ENCODE measurements at regions of chr6 and their contacts with region 1.

Region 1: DNA sequence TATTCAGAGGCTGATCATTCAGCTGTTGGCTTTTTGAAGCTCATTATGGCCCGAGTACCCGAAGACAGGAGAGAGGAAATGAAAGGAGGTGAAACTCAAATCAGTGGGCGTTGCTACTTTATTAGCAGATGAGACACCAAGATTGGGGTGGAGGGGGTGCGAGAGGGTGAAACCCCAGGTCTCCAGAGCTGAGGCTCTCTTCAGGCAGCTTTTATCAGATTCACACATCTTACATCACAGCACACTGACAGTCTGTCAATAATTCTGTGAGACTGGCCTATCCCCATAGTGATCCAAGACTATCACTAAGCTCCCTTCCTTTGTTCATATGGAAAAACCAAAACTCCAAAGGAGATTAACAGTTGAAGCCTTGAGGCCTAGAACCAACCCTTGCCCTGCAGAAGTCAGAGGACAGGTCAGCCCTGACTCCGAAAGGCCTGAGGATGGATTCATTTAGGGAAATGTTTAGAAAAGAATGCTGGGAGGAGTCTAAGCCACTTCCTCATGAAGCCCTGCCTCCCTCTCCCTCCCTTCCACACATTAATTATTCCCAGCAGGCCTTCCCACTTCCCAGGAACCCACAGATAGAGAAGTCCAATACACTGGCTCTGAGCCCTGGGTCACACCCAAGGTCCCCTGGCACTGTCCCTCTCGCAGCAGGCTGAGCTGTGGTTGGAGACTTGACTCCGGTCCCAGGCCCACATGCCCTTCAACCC is 23.2 kb downstream of the TRERF1 start:
- DNase-seq: no peak
- ATAC-seq: peak; percentile 88
- H3K4me3 ChIP-seq: no peak overlapping the region
- H3K27ac ChIP-seq: peak overlapping the region; percentile 71
- H3K4me1 ChIP-seq: peaks cover 55% of the 10 kb centered on the region
- H3K27me3 ChIP-seq: no peaks in the 10 kb centered on the region
- CTCF ChIP-seq: no peak
- EP300 ChIP-seq: no peak
- POLR2A ChIP-seq: no peak
- RAD21 ChIP-seq: no peak; the same call in 1 of the 2 replicates

Region 2: GRCh38 chr6:42249279-42249678 is 179.2 kb before region 1 on chr6:
- CTCF ChIA-PET with region 1: no interaction called
- POLR2A ChIA-PET with region 1: no interaction called
- RAD21 ChIA-PET with region 1: no interaction called
- SMC1A ChIA-PET with region 1: no interaction called
- in situ Hi-C with region 1: no loop called
- intact Hi-C with region 1: no loop called
- DNase-seq: no peak
- ATAC-seq: no peak
- H3K4me3 ChIP-seq: no peak overlapping the region
- H3K27ac ChIP-seq: no peak overlapping the region
- H3K4me1 ChIP-seq: no peaks in the 10 kb centered on the region
- H3K27me3 ChIP-seq: no peaks in the 10 kb centered on the region
- CTCF ChIP-seq: no peak
- EP300 ChIP-seq: no peak
- POLR2A ChIP-seq: no peak
- RAD21 ChIP-seq: no peak

Region 3: GRCh38 chr6:42440778-42441696 is 12.6 kb after region 1 on chr6:
- CTCF ChIA-PET with region 1: interaction called, 4 read pairs
- POLR2A ChIA-PET with region 1: interaction called, 5 read pairs
- RAD21 ChIA-PET with region 1: interaction called, 10 read pairs
- SMC1A ChIA-PET with region 1: interaction called, 15 read pairs
- in situ Hi-C with region 1: no loop called
- intact Hi-C with region 1: no loop called
- DNase-seq: no peak
- ATAC-seq: no peak
- H3K4me3 ChIP-seq: 0 out of 2 replicates have a peak overlapping the region, but pooled peaks have one; percentile 9
- H3K27ac ChIP-seq: no peak overlapping the region
- H3K4me1 ChIP-seq: peaks cover 10% of the 10 kb centered on the region; the same call in 1 of the 2 replicates
- H3K27me3 ChIP-seq: no peaks in the 10 kb centered on the region
- CTCF ChIP-seq: no peak
- EP300 ChIP-seq: no peak
- POLR2A ChIP-seq: no peak
- RAD21 ChIP-seq: no peak

Region 4: GRCh38 chr6:42482174-42482573 is 53.7 kb after region 1 on chr6:
- CTCF ChIA-PET with region 1: no interaction called
- POLR2A ChIA-PET with region 1: no interaction called
- RAD21 ChIA-PET with region 1: no interaction called
- SMC1A ChIA-PET with region 1: interaction called, 4 read pairs
- in situ Hi-C with region 1: loop called (anchors 5 kb)
- intact Hi-C with region 1: no loop called
- DNase-seq: no peak
- ATAC-seq: no peak
- H3K4me3 ChIP-seq: no peak overlapping the region
- H3K27ac ChIP-seq: no peak overlapping the region
- H3K4me1 ChIP-seq: no peaks in the 10 kb centered on the region
- H3K27me3 ChIP-seq: no peaks in the 10 kb centered on the region
- CTCF ChIP-seq: no peak
- EP300 ChIP-seq: no peak
- POLR2A ChIP-seq: no peak
- RAD21 ChIP-seq: no peak

Measured in GM12878 (cell line).